Ovary (tissue), 10 donors: ENCODE measurements at regions of chr2 and their contacts with region 1.

Region 1: DNA sequence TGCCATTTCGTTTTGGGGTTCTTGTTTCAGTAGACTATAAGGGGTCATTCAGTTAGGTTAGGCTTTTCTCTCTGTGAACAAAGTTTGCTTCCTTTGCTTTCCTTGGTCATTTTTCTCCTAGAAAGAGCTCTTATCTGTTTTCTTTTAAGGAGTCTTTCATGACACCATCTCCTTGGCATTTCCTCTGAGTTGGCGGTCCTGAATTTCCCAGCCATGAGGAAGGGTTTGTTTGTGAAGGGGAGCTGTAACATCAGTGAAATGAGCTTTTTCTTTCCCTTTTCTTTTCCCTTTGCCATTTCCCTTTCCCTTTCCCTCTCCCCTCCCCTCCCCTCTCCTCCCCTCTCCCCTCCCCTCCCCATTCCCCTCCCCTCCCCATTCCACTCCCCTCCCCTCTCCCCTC is 61.7 kb downstream of the MAP4K4 start:
- DNase-seq: peak in 1 of 5 donors; percentile 46
- H3K4me3 ChIP-seq: no peak overlapping the region
- H3K27ac ChIP-seq: no peak overlapping the region
- H3K4me1 ChIP-seq: peaks cover 18% of the 10 kb centered on the region
- H3K27me3 ChIP-seq: no peaks in the 10 kb centered on the region
- CTCF ChIP-seq: no peak
- EP300 ChIP-seq: no peak
- POLR2A ChIP-seq: no peak

Region 2: GRCh38 chr2:101509499-101510284 is 249.5 kb before region 1 on chr2:
- intact Hi-C with region 1: loop called in 1 of 4 experiments (anchors 5 kb)
- DNase-seq: peak in 1 of 5 donors; percentile 41
- H3K4me3 ChIP-seq: no peak overlapping the region
- H3K27ac ChIP-seq: no peak overlapping the region
- H3K4me1 ChIP-seq: no peaks in the 10 kb centered on the region
- H3K27me3 ChIP-seq: no peaks in the 10 kb centered on the region
- CTCF ChIP-seq: no peak
- EP300 ChIP-seq: no peak
- POLR2A ChIP-seq: no peak

Region 3: DNA sequence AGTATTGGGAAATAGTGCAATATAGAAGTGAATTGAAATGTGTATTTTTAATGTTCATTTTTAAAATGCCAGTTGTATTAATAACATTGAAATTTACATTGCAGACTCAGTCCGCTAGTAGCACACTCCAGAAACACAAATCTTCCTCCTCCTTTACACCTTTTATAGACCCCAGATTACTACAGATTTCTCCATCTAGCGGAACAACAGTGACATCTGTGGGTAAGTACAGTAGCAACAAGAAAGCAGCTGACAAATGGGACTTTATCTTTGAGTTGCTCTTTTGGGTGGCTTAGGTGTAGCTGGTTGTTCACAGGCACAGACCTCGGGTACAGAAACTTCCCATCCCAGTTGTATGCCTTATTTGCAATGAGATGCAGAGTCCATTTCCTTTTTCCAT is 114.4 kb after region 1 on chr2:
- intact Hi-C with region 1: no loop called
- DNase-seq: no peak
- H3K4me3 ChIP-seq: no peak overlapping the region
- H3K27ac ChIP-seq: no peak overlapping the region
- H3K4me1 ChIP-seq: no peaks in the 10 kb centered on the region
- H3K27me3 ChIP-seq: no peaks in the 10 kb centered on the region
- CTCF ChIP-seq: no peak
- EP300 ChIP-seq: no peak
- POLR2A ChIP-seq: no peak